Natural killer cell (primary cell): ENCODE measurements at regions of chr18 and their contacts with region 1.

Region 1: DNA sequence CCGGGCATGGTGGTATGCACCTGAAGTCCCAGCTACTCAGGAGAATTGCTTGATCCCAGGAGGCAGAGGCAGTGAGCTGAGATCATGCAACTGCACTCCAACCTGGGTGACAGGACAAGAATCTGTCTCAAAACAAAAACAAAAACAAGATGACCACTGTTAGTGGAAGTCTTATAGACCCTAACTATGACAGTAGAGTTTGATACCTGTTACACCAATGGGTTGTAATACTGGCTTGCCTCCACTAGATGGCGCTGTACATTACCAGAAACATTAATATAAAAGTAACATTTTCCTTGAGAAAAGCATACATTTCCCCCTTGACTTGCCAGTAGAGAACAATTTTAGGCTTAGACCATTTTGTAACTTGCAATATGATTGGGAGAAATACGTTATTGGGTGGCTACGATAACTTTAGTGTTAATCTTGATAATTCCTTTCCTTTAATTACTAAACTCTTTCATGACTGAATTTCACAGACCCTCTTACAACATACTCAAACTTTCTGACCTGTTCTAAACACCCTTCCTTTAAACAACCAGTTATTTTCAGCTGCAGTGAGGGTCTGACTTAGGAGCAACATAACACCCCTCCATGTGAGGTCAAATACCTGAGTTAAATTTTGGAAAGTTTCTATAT is 19.5 kb downstream of the SLC25A52 start:
- DNase-seq: peak; percentile 36 to 72
- ATAC-seq: peak; percentile 59 to 85 (median 83)
- H3K4me3 ChIP-seq: no peak overlapping the region
- H3K4me3 Mint-ChIP-seq: no peak overlapping the region
- H3K27ac ChIP-seq: no peak overlapping the region
- H3K27ac Mint-ChIP-seq: no peak overlapping the region
- H3K4me1 ChIP-seq: no peaks in the 10 kb centered on the region
- H3K4me1 Mint-ChIP-seq: no peaks in the 10 kb centered on the region
- H3K27me3 ChIP-seq: no peaks in the 10 kb centered on the region
- H3K27me3 Mint-ChIP-seq: peaks cover 0 to 3% of the 10 kb centered on the region in 2 donors
- CTCF ChIP-seq: peak; percentile 92

Region 2: DNA sequence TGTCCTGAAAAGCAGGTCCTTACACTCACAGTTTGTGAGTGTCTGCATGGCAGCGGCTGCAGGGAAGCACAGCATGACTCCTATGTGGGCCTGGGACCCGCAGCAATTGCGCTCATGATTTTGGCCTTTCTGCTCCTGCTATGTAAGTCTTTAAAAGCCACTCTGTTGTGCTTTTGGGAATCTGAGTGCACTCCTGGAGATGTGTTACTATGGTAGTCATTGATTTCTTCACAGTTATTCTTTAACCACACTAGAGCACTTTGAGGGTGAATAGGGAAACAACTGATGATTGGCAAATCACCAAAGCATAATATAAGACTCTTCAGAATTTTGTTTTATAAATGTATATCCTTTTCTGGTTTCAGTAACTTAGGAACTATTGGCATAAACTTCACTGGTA is 202.4 kb before region 1 on chr18:
- intact Hi-C with region 1: no loop called
- DNase-seq: no peak
- ATAC-seq: no peak
- H3K4me3 ChIP-seq: no peak overlapping the region
- H3K4me3 Mint-ChIP-seq: no peak overlapping the region
- H3K27ac ChIP-seq: no peak overlapping the region
- H3K27ac Mint-ChIP-seq: no peak overlapping the region
- H3K4me1 ChIP-seq: no peaks in the 10 kb centered on the region
- H3K4me1 Mint-ChIP-seq: no peaks in the 10 kb centered on the region
- H3K27me3 ChIP-seq: no peaks in the 10 kb centered on the region
- H3K27me3 Mint-ChIP-seq: peaks cover 0 to 3% of the 10 kb centered on the region in 2 donors
- CTCF ChIP-seq: no peak

Region 3: DNA sequence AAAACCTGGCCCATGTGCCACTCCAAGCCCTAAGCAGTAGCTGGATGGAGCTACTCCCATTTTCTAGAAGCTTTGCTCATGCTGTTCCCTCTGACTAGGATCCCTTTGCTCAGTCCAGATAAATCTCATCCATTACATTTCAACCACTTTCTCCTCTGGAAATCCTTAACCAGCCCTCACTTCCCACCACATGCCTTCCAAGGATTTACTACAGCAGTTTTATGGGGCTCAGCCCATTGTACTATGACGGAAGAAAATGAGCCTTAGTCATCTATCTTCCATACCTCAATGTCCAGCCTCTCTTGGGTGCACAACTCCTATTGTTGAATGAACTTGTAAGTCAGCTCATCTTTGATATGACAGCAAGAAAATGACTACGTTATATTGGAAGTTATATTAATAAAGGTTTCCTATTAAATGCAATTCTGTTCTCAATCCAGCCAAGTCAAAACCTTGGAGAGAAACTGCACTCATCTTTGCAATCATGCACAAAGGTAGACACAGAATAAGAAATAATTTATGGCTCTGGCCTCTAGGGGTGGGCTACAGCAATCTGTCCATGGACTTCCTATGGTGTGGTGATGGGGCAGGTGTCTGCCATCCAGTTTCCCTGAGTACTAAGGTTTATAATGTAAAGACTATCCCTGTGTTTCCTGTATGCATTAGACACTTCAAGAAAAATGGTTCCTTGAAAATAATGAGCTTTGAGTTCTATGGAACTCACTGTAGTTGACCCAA is 60.2 kb before region 1 on chr18:
- intact Hi-C with region 1: no loop called
- DNase-seq: peak in 1 of 2 donors; percentile 35
- ATAC-seq: no peak
- H3K4me3 ChIP-seq: no peak overlapping the region
- H3K4me3 Mint-ChIP-seq: peak overlapping the region; percentile 10
- H3K27ac ChIP-seq: no peak overlapping the region
- H3K27ac Mint-ChIP-seq: no peak overlapping the region
- H3K4me1 ChIP-seq: peaks cover 18% of the 10 kb centered on the region
- H3K4me1 Mint-ChIP-seq: peaks cover 35 to 58% of the 10 kb centered on the region in 2 donors
- H3K27me3 ChIP-seq: no peaks in the 10 kb centered on the region
- H3K27me3 Mint-ChIP-seq: no peaks in the 10 kb centered on the region
- CTCF ChIP-seq: peak; percentile 42

Region 4: DNA sequence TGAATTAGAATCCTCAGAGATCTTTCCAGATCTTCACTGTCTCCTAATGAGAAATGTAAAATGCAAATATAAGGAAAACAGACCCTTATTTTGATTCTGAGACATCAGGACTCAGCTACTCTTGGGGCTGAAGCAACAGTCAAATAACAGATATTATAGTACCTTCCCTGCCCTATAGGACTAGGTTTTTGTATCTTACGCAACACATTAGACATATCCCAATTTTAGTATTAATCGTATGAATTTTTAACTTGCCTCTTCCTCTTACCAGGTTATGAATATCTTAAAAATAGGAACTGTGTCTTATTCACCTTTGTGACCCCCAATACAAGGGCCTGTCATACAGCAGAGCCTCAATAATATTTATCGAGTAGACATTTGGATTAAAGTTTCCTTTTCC is 31.5 kb after region 1 on chr18:
- intact Hi-C with region 1: no loop called
- DNase-seq: no peak
- ATAC-seq: no peak
- H3K4me3 ChIP-seq: no peak overlapping the region
- H3K4me3 Mint-ChIP-seq: no peak overlapping the region
- H3K27ac ChIP-seq: no peak overlapping the region
- H3K27ac Mint-ChIP-seq: no peak overlapping the region
- H3K4me1 ChIP-seq: no peaks in the 10 kb centered on the region
- H3K4me1 Mint-ChIP-seq: no peaks in the 10 kb centered on the region
- H3K27me3 ChIP-seq: no peaks in the 10 kb centered on the region
- H3K27me3 Mint-ChIP-seq: no peaks in the 10 kb centered on the region
- CTCF ChIP-seq: no peak

Region 5: GRCh38 chr18:31977270-31977872 is 236.2 kb after region 1 on chr18:
- intact Hi-C with region 1: loop called (anchors 1 kb)
- DNase-seq: peak in 1 of 2 donors; percentile 68
- ATAC-seq: peak; percentile 48 to 52 (median 49)
- H3K4me3 ChIP-seq: no peak overlapping the region
- H3K4me3 Mint-ChIP-seq: no peak overlapping the region
- H3K27ac ChIP-seq: no peak overlapping the region
- H3K27ac Mint-ChIP-seq: no peak overlapping the region
- H3K4me1 ChIP-seq: no peaks in the 10 kb centered on the region
- H3K4me1 Mint-ChIP-seq: no peaks in the 10 kb centered on the region
- H3K27me3 ChIP-seq: no peaks in the 10 kb centered on the region
- H3K27me3 Mint-ChIP-seq: no peaks in the 10 kb centered on the region
- CTCF ChIP-seq: peak; percentile 57